GM10248 (cell line): ENCODE measurements at regions of chr6 and their contacts with region 1.

Region 1: DNA sequence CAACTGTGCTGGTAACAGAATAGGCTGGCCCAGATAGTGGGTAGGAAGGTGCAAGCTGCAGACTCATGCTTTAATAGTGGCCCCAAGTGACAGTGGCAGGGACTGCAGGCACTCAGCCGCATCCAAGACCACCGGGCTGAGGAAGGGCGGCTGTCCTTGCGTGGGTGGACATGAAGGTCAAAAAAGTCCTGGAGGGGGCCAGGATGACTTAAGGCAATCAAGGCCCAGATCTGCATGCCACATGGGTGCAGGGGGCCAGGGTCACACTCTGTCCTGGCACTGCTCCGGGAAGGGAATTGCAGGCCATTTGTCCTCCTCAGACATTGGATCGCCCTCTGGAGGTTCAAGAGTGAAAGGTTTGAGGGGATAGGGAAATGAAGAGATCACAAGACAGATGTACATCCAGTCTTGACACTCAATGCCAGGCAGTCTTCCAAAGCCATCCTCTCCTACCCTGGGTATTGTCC is 10.4 kb upstream of the VNN2 start:
- DNase-seq: peak; percentile 48
- CTCF ChIP-seq: peak; percentile 69

Region 2: DNA sequence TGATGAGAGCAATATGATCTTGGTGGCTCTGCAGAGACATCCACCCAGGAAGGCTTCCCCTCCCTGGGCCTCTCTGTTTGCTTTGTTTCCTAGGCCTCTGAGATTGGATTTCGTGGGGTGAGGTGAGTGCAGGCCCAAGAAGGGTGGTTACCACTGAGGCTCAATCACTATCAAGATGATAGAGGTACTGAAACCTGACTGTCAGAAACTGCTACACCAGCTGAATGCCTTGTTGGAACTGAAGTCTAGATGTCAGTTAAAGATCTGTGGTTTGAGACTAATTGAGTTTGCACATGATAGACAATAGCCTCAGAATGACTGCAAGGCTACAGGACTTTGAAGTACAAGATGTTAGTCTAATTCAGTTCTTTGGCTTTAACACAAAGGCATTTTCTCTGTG is 69.5 kb before region 1 on chr6:
- CTCF ChIA-PET with region 1: no interaction called
- POLR2A ChIA-PET with region 1: no interaction called
- DNase-seq: no peak
- CTCF ChIP-seq: no peak

Region 3: DNA sequence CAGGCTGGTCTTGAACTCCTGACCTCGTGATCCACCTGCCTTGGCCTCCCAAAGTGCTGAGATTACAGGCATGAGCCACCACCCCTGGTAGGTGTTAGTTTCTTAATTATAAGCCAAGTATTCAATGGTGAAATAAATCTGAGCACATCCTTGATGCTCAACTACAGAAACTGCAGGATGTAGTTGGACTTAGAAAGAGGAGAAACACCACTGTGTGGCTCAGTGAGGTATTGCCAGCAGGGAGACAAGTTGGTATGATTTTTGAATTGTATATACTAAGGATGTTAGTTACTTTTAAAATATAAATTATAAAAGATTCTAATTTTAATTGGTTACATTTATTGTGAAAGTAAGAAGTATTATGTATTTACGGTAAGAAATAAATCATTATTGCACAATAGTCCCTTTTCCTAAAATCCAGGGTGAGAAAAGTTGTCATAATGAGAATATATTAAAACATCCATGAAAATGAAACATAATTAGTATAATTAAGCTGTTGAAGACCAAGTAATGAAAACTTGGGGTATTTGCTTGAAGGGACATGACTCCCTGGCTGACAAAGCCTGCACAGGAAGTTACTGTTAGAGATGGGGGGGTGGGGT is 12.8 kb after region 1 on chr6:
- CTCF ChIA-PET with region 1: interaction called, 11 read pairs
- POLR2A ChIA-PET with region 1: no interaction called
- DNase-seq: no peak
- CTCF ChIP-seq: no peak